Endothelial cell of umbilical vein (primary cell): ENCODE measurements at regions of chr17 and their contacts with region 1.

Region 1: GRCh38 chr17:82098072-82098821 is at the start of gene FASN:
- DNase-seq: peak; percentile 93
- H3K4me3 ChIP-seq: peak within 1 kb of the TSS; percentile 35 to 78 (median 54)
- H3K27ac ChIP-seq: peak within 1 kb of the TSS; percentile 76
- H3K4me1 ChIP-seq: peaks cover 20% of the 10 kb centered on the region
- H3K27me3 ChIP-seq: no peaks in the 10 kb centered on the region
- CTCF ChIP-seq: peak; percentile 25 to 56
- POLR2A ChIP-seq: peak; percentile 87
- total RNA-seq, gene FASN: 351 and 360 TPM in 2 replicates

Region 2: DNA sequence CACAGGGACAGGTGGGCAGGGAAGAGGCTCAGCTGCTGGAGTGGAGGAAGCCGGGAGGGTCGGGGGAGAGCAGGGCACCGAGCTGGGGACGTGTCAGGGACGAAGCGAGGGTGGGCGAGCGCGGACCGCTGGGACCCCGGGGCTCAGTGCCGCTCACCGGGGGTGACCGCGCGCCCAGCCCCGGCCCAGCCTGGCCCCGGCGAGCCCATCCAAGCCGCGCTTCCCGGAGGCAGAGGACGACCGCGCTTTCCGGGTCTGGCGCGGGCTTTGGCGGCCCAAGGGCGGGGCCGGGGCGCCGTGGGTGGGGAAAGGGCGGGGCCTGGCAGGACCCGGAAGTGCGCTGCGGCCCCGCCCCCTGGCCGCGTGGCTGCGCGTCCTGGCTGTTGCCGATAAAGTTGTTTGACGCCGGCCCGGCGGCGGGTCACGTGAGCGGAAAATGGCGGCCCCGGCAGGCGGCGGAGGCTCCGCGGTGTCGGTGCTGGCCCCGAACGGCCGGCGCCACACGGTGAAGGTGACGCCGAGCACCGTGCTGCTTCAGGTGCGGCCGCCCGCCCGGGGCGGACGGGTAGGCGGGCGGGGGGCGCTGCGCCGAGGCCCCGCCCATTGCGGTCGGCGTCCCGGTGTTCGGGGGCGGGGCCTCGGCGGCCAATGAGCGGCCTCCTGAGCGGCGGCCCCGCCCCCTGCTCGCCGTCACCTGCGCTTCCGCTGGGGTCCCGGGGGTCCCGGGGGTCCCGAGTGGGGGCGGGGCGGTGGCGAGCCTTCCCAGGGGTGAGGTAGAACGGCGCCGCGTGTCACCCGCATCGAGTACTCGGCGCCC is 120.8 kb before region 1 on chr17 and contains the start of gene ASPSCR1:
- CTCF ChIA-PET with region 1: no interaction called
- POLR2A ChIA-PET with region 1: no interaction called
- dilution Hi-C with region 1: no loop called
- intact Hi-C with region 1: loop called (anchors 5 kb)
- DNase-seq: peak; percentile 87
- H3K4me3 ChIP-seq: peak within 1 kb of the TSS; percentile 56 to 80 (median 61)
- H3K27ac ChIP-seq: peak within 1 kb of the TSS; percentile 90
- H3K4me1 ChIP-seq: peaks cover 5% of the 10 kb centered on the region
- H3K27me3 ChIP-seq: no peaks in the 10 kb centered on the region
- CTCF ChIP-seq: no peak
- POLR2A ChIP-seq: peak; percentile 92
- total RNA-seq, gene ASPSCR1: 30.9 and 36.5 TPM in 2 replicates

Region 3: GRCh38 chr17:82129095-82129494 is 30.8 kb after region 1 on chr17:
- CTCF ChIA-PET with region 1: no interaction called
- POLR2A ChIA-PET with region 1: interaction called, 10 read pairs
- dilution Hi-C with region 1: no loop called
- intact Hi-C with region 1: no loop called
- DNase-seq: no peak
- H3K4me3 ChIP-seq: no peak overlapping the region
- H3K27ac ChIP-seq: no peak overlapping the region
- H3K4me1 ChIP-seq: no peaks in the 10 kb centered on the region
- H3K27me3 ChIP-seq: no peaks in the 10 kb centered on the region
- CTCF ChIP-seq: peak in 1 of 2 donors; percentile 2
- POLR2A ChIP-seq: no peak

Region 4: DNA sequence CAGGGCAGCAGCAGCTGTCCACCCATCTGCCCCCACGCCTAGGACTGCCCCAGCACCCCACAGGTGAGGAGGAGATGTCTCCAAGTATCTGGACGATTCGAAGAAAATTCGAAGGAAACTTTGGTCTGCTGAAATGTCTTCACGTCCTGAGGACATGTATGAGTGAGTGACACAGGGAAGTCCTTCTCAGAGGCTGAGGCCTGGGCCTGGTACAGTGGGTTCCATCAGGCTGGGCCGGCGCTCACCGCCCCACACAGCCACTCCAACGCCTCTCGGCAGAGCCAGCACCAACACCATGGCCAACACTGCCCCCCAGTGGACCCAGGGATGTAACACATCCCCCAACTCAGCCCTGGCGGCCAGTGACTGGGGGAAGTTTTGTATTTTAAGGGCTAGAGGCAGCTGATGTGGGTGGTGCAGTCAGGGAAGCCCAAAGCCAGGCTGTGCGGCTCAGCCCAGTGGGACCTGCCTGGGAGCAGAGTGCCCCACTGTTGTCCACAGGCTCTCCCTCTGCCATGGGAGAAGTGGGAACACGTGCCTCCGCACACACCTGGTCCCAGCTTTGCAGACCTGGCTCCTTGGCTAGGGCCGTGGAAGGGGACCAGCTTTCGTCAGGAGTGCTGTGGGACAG is 55.6 kb after region 1 on chr17:
- CTCF ChIA-PET with region 1: interaction called, 3 read pairs
- POLR2A ChIA-PET with region 1: no interaction called
- dilution Hi-C with region 1: no loop called
- intact Hi-C with region 1: loop called (anchors 2 kb)
- DNase-seq: peak; percentile 56
- H3K4me3 ChIP-seq: no peak overlapping the region
- H3K27ac ChIP-seq: no peak overlapping the region
- H3K4me1 ChIP-seq: no peaks in the 10 kb centered on the region
- H3K27me3 ChIP-seq: no peaks in the 10 kb centered on the region
- CTCF ChIP-seq: peak; percentile 72 to 92
- POLR2A ChIP-seq: no peak